Endothelial cell of umbilical vein (primary cell): ENCODE measurements at regions of chr18 and their contacts with region 1.

Region 1: DNA sequence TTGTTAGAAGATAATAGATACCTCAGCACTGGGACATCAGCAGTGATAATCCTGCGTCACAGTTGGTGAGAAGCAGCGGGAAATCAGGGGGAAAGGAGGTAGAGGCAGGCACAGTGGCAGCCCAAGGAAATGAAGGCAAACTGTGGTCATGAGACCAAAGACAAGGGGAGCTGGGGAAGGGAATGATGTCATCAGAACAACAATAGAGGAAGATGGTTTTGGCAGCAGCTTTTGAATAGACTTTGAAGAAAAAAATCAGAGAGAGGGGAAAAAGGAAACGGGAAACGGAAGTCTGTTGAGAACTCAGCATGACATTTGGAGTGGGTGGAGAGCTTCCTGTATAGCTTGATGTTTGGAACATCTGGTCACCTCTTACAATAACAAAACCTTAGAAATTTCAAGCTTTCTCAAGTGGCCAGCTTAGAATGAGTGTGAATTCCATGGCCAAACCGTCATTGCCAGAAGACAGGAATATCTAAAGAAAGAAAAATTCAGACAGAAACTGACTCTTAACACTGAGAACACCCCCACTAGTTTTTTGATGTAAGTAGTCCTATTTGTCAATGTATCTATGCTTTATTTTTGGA is 18.4 kb upstream of the YES1 start:
- DNase-seq: peak; percentile 96
- H3K4me3 ChIP-seq: peak overlapping the region in 1 of 3 experiments; percentile 25
- H3K27ac ChIP-seq: peak overlapping the region; percentile 91
- H3K4me1 ChIP-seq: peaks cover 16% of the 10 kb centered on the region
- H3K27me3 ChIP-seq: no peaks in the 10 kb centered on the region
- CTCF ChIP-seq: no peak
- POLR2A ChIP-seq: peak; percentile 60

Region 2: GRCh38 chr18:623761-624620 is 206.4 kb before region 1 on chr18:
- CTCF ChIA-PET with region 1: interaction called, 652 read pairs
- POLR2A ChIA-PET with region 1: no interaction called
- dilution Hi-C with region 1: no loop called
- intact Hi-C with region 1: loop called (anchors 1 kb)
- DNase-seq: peak; percentile 64
- H3K4me3 ChIP-seq: no peak overlapping the region
- H3K27ac ChIP-seq: no peak overlapping the region
- H3K4me1 ChIP-seq: no peaks in the 10 kb centered on the region
- H3K27me3 ChIP-seq: peaks cover 0 to 2% of the 10 kb centered on the region in 2 experiments
- CTCF ChIP-seq: peak; percentile 55 to 78
- POLR2A ChIP-seq: no peak

Region 3: GRCh38 chr18:712401-713134 is 117.8 kb before region 1 on chr18 and contains the start of gene ENOSF1:
- CTCF ChIA-PET with region 1: interaction called, 33 read pairs
- POLR2A ChIA-PET with region 1: interaction called, 4 read pairs
- dilution Hi-C with region 1: no loop called
- intact Hi-C with region 1: loop called (anchors 1 kb)
- DNase-seq: peak; percentile 84
- H3K4me3 ChIP-seq: peak within 1 kb of the TSS; percentile 74 to 84 (median 82)
- H3K27ac ChIP-seq: peak within 1 kb of the TSS; percentile 49
- H3K4me1 ChIP-seq: peaks cover 5% of the 10 kb centered on the region
- H3K27me3 ChIP-seq: no peaks in the 10 kb centered on the region
- CTCF ChIP-seq: peak; percentile 72 to 92
- POLR2A ChIP-seq: peak; percentile 51
- total RNA-seq, gene ENOSF1: 50.5 and 52.5 TPM in 2 replicates

Region 4: DNA sequence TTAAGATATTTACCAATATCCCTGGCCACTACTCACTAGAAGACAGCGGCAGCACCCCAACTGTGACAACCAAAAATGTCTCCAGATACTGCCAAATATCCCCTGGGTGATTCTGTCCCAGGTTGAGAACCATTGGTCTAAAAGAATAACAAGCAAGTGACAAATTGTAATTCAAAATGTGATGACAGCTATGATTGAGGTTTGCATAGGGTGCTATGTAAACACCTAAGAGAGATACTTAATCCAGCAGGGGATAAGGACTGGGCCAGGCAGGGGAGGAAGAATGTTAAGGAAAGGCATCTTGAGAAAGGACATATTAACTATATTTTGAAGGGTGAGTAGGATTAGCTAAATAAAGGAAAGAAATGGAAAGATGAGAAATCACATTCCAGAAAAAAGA is 80.0 kb before region 1 on chr18:
- CTCF ChIA-PET with region 1: interaction called, 301 read pairs
- POLR2A ChIA-PET with region 1: no interaction called
- dilution Hi-C with region 1: loop called (anchors 25 kb)
- intact Hi-C with region 1: no loop called
- DNase-seq: no peak
- H3K4me3 ChIP-seq: no peak overlapping the region
- H3K27ac ChIP-seq: no peak overlapping the region
- H3K4me1 ChIP-seq: peaks cover 11% of the 10 kb centered on the region
- H3K27me3 ChIP-seq: no peaks in the 10 kb centered on the region
- CTCF ChIP-seq: no peak
- POLR2A ChIP-seq: no peak

Region 5: DNA sequence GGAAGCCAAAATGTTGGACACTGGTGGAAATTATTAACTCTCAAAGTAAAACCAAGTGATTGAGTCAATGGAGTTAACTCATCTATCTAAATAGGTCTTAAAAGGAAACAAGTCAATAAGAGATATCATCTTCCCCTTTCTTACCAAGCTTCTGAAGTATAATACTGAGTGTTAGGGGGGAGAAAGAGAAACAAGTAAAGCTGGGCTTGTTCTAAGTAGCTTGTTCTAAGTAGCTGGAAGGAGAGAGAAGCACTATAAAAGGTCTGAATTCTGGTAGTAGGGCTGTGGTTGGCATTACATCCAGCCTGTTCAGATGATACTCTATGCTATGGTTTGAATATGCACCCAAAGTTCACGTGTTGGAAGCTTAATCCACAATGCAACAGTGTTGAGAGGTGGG is 45.2 kb before region 1 on chr18:
- CTCF ChIA-PET with region 1: interaction called, 17 read pairs
- POLR2A ChIA-PET with region 1: no interaction called
- dilution Hi-C with region 1: no loop called
- intact Hi-C with region 1: no loop called
- DNase-seq: no peak
- H3K4me3 ChIP-seq: no peak overlapping the region
- H3K27ac ChIP-seq: no peak overlapping the region
- H3K4me1 ChIP-seq: peaks cover 10% of the 10 kb centered on the region
- H3K27me3 ChIP-seq: no peaks in the 10 kb centered on the region
- CTCF ChIP-seq: no peak
- POLR2A ChIP-seq: no peak

Region 6: DNA sequence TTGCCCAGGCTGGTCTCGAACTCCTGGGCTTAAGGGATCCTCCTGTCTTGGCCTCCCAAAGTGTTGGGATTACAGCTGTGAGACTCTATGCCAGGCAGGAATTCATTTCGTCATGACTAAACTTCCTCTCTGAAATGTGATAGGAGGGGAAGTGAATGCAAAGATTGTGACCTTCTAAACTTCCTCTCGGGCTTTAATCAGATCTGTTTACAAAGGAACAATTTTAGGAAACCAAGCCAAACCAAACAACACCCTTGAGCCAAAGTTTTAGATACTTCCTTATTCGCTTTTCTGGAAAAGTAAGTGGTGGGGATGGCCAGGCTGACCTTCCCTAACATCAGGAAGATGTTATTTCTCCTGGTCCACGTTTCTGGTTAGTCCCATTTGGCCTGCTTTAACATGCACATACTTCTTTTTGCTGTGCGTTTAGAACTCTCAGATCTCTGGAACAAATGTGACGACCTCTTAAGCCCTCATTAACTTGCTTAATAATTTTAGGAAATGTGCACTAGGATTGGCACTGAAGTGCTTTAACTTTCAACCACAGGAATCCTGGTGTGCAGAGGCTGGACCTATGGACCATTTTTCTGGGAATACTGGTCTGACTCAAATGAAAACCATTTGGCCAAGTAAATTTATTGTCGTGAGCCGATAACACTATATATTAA is 14.9 kb after region 1 on chr18:
- CTCF ChIA-PET with region 1: interaction called, 99 read pairs
- POLR2A ChIA-PET with region 1: no interaction called
- dilution Hi-C with region 1: no loop called
- intact Hi-C with region 1: loop called (anchors 1 kb)
- DNase-seq: peak; percentile 96
- H3K4me3 ChIP-seq: no peak overlapping the region
- H3K27ac ChIP-seq: peak overlapping the region; percentile 68
- H3K4me1 ChIP-seq: peaks cover 28% of the 10 kb centered on the region
- H3K27me3 ChIP-seq: no peaks in the 10 kb centered on the region
- CTCF ChIP-seq: no peak
- POLR2A ChIP-seq: peak; percentile 44